ENCODE measurements at regions of chr15 and their contacts with region 1.

Region 1: DNA sequence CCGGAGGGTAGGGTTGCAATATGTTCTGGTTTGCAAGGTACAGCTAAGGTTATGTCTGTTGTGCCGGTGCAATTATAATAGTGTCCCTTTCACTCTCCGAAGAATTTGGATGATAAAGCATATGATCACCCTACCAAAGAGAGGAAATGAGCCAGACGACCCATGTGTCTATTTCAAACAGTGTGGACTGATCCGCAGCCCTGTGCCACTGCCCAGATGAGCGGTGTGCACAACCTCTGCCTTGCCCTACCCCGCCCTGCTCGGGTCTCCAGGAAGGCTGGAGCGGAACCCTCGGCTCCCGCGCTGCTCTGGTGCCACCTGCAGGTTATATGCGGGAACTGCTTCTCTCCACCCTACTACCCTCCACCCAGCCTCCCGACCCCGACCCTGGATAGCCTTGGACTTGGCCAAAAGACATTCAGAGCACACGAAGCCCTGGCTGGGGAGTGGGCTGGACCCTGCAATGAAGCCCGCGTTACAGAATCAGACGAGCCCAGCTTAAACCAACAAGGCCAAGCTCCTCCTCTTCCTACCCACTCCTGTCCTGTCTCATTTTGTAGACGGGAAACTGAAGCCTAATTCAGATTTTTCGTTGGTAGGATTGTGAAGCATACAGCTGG is 68.4 kb upstream of the CHRNB4 start:
- DNase-seq: peak; percentile 78 to 86
- H3K4me3 ChIP-seq: peak overlapping the region in 2 of 4 donors; percentile 15 to 29
- H3K27ac ChIP-seq: no peak overlapping the region
- H3K4me1 ChIP-seq: peaks cover 0 to 10% (median 6%) of the 10 kb centered on the region in 4 donors
- H3K27me3 ChIP-seq: peaks cover 0 to 35% (median 4%) of the 10 kb centered on the region in 3 donors
- CTCF ChIP-seq: peak in 5 of 7 experiments; percentile 61 to 92 (median 86)
- EP300 ChIP-seq: no peak
- POLR2A ChIP-seq: no peak

Region 2: GRCh38 chr15:78618490-78618934 is 90.9 kb before region 1 on chr15:
- intact Hi-C with region 1: loop called (anchors 2 kb)
- DNase-seq: peak; percentile 91 to 95
- H3K4me3 ChIP-seq: no peak overlapping the region
- H3K27ac ChIP-seq: peak overlapping the region in 1 of 5 donors; percentile 48
- H3K4me1 ChIP-seq: peaks cover 14 to 28% (median 21%) of the 10 kb centered on the region in 4 donors
- H3K27me3 ChIP-seq: peaks cover 0 to 47% (median 36%) of the 10 kb centered on the region in 3 donors
- CTCF ChIP-seq: peak in 5 of 7 experiments; percentile 44 to 94 (median 79)
- EP300 ChIP-seq: peak; percentile 61
- POLR2A ChIP-seq: no peak

Measured in stomach (tissue), 19 donors.